ENCODE measurements at regions of chr13 and their contacts with region 1.

Region 1: DNA sequence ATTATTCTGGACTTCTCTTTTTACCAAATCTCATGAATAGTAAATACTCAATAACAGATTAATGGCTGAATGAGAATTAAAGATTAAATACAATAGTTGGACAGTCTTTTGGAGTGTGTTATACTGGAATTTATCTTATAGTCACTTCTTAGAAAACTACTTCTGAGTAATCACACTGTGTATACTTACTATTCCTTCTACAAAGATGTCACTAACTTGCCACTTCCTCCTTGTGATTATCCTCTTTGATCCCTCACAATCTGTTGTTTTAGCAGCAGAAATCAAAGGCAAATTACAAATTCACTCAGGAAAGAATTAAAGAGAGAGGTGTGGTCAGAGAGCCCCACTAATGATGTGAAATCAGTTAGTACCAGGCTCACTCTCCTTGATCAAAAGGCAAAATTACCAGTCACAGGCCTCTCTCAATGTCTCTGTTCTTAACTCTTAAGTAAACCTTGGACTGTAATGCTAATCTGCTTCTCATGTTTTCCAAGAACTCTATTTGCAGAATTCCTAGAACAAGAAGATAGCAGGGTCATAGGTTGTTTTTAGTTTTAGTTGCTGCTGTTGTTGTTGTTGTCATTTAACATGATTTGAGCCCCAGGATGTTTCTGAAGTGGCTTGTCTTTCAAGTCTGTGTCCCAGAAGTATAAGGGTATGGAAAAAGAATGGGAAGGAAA is 37.3 kb upstream of the FNDC3A start:
- DNase-seq: no peak
- ATAC-seq: no peak
- H3K4me3 ChIP-seq: no peak overlapping the region
- H3K27ac ChIP-seq: no peak overlapping the region
- H3K4me1 ChIP-seq: no peaks in the 10 kb centered on the region
- H3K27me3 ChIP-seq: no peaks in the 10 kb centered on the region
- CTCF ChIP-seq: no peak
- POLR2A ChIP-seq: no peak
- RAD21 ChIP-seq: no peak

Region 2: DNA sequence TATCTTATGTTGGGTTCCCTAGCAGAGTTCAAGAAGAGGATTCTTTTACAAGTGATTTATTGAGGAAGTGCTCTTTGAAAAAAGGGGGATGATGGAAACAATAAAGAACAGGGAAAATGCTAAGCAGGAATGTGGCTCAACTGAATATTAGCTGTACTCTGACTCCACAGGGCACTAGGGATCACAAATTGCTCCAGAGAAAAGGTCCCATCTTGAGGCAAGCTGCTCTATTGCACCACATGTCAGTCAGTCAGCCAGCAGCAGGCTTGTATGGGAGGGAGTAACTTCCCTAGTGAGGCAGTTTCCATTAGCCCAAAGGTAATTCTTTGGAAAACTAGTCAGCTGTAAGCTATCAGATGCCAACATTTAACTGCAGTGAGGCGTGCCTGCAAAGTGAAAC is 36.1 kb before region 1 on chr13:
- CTCF ChIA-PET with region 1: no interaction called
- POLR2A ChIA-PET with region 1: no interaction called
- dilution Hi-C with region 1: no loop called
- in situ Hi-C with region 1: no loop called
- intact Hi-C with region 1: loop called (anchors 5 kb)
- DNase-seq: peak; percentile 19
- ATAC-seq: no peak
- H3K4me3 ChIP-seq: no peak overlapping the region
- H3K27ac ChIP-seq: no peak overlapping the region
- H3K4me1 ChIP-seq: no peaks in the 10 kb centered on the region
- H3K27me3 ChIP-seq: no peaks in the 10 kb centered on the region; the same call in 1 of the 2 replicates
- CTCF ChIP-seq: no peak
- POLR2A ChIP-seq: no peak
- RAD21 ChIP-seq: no peak